ENCODE measurements at regions of chrX and their contacts with region 1.

Region 1: GRCh38 chrX:119685225-119686066 is 7.5 kb downstream of the SEPTIN6 start:
- DNase-seq: no peak
- ATAC-seq: peak; percentile 56
- H3K4me3 ChIP-seq: peak overlapping the region; percentile 60; the same call in 1 of the 2 replicates
- H3K27ac ChIP-seq: peak overlapping the region; percentile 84
- H3K4me1 ChIP-seq: peaks cover 57% of the 10 kb centered on the region
- H3K27me3 ChIP-seq: no peaks in the 10 kb centered on the region
- CTCF ChIP-seq: no peak
- EP300 ChIP-seq: no peak
- POLR2A ChIP-seq: no peak
- RAD21 ChIP-seq: no peak

Region 2: GRCh38 chrX:118904218-118904617 is 781.2 kb before region 1 on chrX:
- CTCF ChIA-PET with region 1: no interaction called
- POLR2A ChIA-PET with region 1: no interaction called
- RAD21 ChIA-PET with region 1: no interaction called
- SMC1A ChIA-PET with region 1: no interaction called
- in situ Hi-C with region 1: no loop called
- intact Hi-C with region 1: no loop called
- DNase-seq: no peak
- ATAC-seq: peak; percentile 74
- H3K4me3 ChIP-seq: no peak overlapping the region
- H3K27ac ChIP-seq: no peak overlapping the region
- H3K4me1 ChIP-seq: no peaks in the 10 kb centered on the region
- H3K27me3 ChIP-seq: no peaks in the 10 kb centered on the region
- CTCF ChIP-seq: no peak
- EP300 ChIP-seq: no peak
- POLR2A ChIP-seq: no peak
- RAD21 ChIP-seq: no peak

Region 3: DNA sequence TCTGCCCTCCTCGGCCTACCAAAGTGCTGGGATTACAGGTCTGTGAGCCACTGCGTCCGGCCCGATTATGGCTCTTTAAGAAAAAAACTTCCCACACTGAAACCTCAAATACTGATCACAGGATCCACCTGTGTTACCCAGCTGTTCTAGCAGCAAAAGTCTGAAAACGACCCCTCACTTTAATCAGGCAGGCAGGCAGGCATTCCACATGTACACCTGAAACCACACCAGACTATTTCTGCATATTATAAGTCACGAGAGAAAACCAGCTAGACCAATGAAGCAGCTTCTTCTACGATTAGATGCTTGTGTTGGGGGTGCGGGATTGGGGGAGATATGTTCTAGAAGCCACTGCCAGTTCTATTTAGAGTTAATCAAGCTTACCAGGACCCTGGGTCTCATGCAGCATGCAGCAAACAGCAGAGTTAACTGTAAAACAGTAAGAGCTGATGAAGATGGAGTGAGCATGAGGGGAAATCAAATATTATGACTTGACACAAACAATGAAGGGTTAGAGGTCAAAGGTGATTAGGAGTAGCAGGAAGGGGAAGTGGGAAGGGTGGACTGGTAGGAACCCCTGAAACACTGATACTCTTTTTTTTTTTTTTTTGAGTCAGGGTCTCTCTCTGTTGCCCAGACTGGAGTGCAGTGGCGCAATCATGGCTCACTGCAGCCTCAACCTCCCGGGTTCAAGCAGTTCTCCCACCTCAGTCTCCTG is 60.3 kb before region 1 on chrX:
- CTCF ChIA-PET with region 1: interaction called, 10 read pairs
- POLR2A ChIA-PET with region 1: interaction called, 12 read pairs
- RAD21 ChIA-PET with region 1: interaction called, 24 read pairs
- SMC1A ChIA-PET with region 1: interaction called, 30 read pairs
- in situ Hi-C with region 1: no loop called
- intact Hi-C with region 1: no loop called
- DNase-seq: no peak
- ATAC-seq: no peak
- H3K4me3 ChIP-seq: no peak overlapping the region
- H3K27ac ChIP-seq: no peak overlapping the region
- H3K4me1 ChIP-seq: peaks cover 7% of the 10 kb centered on the region
- H3K27me3 ChIP-seq: no peaks in the 10 kb centered on the region
- CTCF ChIP-seq: no peak
- EP300 ChIP-seq: no peak
- POLR2A ChIP-seq: no peak
- RAD21 ChIP-seq: no peak

Region 4: DNA sequence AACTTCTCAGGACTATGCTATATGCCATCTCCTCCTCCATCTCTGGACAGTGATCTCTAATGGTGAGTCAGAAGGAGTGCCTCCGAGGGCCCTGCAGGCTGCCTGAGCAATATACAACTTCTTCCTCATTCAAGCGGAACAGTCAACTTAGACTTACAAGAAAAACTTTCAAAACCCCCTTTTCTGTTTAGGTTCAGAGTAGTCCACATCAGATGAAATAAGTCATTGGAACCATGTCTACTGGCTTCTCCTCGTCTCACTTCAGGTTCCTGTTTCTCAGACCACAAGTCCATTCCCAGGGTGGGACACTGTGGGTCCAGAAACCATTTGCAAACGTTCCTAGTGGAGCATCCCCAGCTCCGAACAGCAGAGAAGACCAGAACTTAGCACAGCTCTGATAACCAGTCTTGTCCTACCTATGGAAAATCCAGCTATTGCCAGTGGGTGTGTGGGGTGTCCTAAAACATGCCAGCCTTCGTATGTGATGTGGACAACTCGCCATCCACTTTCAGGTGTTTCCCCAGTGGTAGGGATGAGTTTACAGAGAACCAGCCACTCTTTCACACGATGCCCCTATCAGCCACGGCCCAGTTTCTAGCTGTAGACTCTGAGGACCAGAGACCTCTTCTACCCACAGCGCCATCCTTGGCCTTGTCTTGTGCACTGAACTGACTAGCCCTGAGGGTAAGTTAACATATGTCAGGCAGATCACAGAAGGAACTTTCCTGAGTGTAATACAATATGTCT is 46.5 kb before region 1 on chrX:
- CTCF ChIA-PET with region 1: no interaction called
- POLR2A ChIA-PET with region 1: interaction called, 15 read pairs
- RAD21 ChIA-PET with region 1: interaction called, 41 read pairs
- SMC1A ChIA-PET with region 1: interaction called, 25 read pairs
- in situ Hi-C with region 1: no loop called
- intact Hi-C with region 1: loop called (anchors 2 kb)
- DNase-seq: peak; percentile 81
- ATAC-seq: peak; percentile 84
- H3K4me3 ChIP-seq: no peak overlapping the region
- H3K27ac ChIP-seq: peak overlapping the region; percentile 67
- H3K4me1 ChIP-seq: peaks cover 61% of the 10 kb centered on the region
- H3K27me3 ChIP-seq: no peaks in the 10 kb centered on the region
- CTCF ChIP-seq: 0 out of 6 replicates have a peak, but pooled peaks of 1 of the 3 experiments have one; percentile 10
- EP300 ChIP-seq: no peak
- POLR2A ChIP-seq: no peak
- RAD21 ChIP-seq: no peak

Region 5: DNA sequence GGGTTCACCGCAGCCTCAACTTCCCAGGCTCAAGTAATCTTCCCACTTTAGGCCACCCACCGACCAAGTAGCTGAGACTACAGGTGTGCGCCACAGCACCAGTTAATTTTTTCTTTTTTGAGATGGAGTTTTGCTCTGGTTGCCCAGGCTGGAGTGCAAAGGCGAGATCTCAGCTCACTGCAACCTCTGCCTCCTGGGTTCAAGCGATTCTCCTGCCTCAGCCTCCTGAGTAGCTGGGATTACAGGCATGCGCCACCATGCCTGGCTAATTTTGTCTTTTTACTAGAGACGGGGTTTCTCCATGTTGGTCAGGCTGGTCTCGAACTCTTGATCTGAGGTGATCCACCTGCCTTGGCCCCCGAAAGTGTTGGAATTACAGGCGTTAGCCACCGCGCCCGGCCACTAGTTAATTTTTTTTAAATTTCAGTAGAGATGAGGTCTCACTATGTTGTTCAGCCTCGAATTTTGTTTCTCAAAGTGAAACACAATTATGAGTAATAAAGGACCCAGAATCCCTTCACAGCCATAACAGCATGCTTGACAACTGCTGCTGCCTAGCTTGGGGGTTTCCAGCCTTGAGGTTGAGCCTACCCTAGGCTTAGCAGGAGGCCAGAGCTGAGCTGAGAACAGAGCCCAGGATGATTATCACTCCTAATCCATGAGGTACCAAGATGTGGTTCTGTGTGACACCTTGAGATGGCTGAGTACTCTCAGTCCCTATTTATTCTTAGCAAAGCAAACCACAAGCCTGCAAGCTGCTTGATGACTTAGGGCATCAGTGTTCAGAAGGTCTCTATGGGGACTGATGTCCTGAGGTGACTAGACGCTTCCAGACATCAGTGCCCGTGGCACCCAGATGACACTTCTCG is 37.7 kb before region 1 on chrX:
- CTCF ChIA-PET with region 1: interaction called, 14 read pairs
- POLR2A ChIA-PET with region 1: interaction called, 12 read pairs
- RAD21 ChIA-PET with region 1: interaction called, 20 read pairs
- SMC1A ChIA-PET with region 1: interaction called, 28 read pairs
- in situ Hi-C with region 1: no loop called
- intact Hi-C with region 1: loop called (anchors 1 kb)
- DNase-seq: peak; percentile 98
- ATAC-seq: peak; percentile 95
- H3K4me3 ChIP-seq: 0 out of 2 replicates have a peak overlapping the region, but pooled peaks have one; percentile 11
- H3K27ac ChIP-seq: peak overlapping the region; percentile 89
- H3K4me1 ChIP-seq: peaks cover 47% of the 10 kb centered on the region
- H3K27me3 ChIP-seq: no peaks in the 10 kb centered on the region
- CTCF ChIP-seq: no peak
- EP300 ChIP-seq: peak; percentile 94 to 97
- POLR2A ChIP-seq: peak; percentile 53
- RAD21 ChIP-seq: no peak

Region 6: GRCh38 chrX:119669424-119670037 is 15.9 kb before region 1 on chrX:
- CTCF ChIA-PET with region 1: interaction called, 13 read pairs
- POLR2A ChIA-PET with region 1: interaction called, 3 read pairs
- RAD21 ChIA-PET with region 1: interaction called, 9 read pairs
- SMC1A ChIA-PET with region 1: interaction called, 51 read pairs
- in situ Hi-C with region 1: no loop called
- intact Hi-C with region 1: loop called (anchors 2 kb)
- DNase-seq: no peak
- ATAC-seq: no peak
- H3K4me3 ChIP-seq: no peak overlapping the region
- H3K27ac ChIP-seq: no peak overlapping the region
- H3K4me1 ChIP-seq: peaks cover 25% of the 10 kb centered on the region
- H3K27me3 ChIP-seq: no peaks in the 10 kb centered on the region
- CTCF ChIP-seq: no peak
- EP300 ChIP-seq: no peak
- POLR2A ChIP-seq: no peak
- RAD21 ChIP-seq: no peak

Measured in GM12878 (cell line).